ENCODE measurements at regions of chr7 and their contacts with region 1.

Region 1: DNA sequence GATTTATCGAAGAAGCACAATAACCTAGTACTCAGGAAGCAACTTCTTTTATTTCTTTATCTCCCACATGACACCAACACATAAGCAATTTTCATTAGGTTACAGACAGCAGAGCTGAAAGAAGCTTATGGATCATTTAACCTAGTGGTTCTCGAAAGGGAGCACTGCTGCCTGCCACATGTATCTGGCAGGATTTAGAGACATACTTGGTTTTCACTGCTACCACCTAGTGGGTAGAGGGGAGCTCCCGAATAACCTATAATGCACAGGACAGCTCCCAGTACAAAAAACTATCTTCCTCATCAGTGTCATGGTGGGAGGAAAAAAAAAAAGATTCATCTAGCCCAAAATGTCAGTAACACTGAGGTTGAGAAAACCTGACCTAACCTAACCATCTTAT is 34.5 kb downstream of the FZD9 start:
- DNase-seq: no peak
- H3K4me3 ChIP-seq: no peak overlapping the region
- CTCF ChIP-seq: no peak
- POLR2A ChIP-seq: no peak

Region 2: GRCh38 chr7:73647725-73648592 is 179.9 kb after region 1 on chr7:
- intact Hi-C with region 1: loop called (anchors 10 kb)
- DNase-seq: no peak
- H3K4me3 ChIP-seq: no peak overlapping the region
- CTCF ChIP-seq: no peak
- POLR2A ChIP-seq: no peak

Region 3: DNA sequence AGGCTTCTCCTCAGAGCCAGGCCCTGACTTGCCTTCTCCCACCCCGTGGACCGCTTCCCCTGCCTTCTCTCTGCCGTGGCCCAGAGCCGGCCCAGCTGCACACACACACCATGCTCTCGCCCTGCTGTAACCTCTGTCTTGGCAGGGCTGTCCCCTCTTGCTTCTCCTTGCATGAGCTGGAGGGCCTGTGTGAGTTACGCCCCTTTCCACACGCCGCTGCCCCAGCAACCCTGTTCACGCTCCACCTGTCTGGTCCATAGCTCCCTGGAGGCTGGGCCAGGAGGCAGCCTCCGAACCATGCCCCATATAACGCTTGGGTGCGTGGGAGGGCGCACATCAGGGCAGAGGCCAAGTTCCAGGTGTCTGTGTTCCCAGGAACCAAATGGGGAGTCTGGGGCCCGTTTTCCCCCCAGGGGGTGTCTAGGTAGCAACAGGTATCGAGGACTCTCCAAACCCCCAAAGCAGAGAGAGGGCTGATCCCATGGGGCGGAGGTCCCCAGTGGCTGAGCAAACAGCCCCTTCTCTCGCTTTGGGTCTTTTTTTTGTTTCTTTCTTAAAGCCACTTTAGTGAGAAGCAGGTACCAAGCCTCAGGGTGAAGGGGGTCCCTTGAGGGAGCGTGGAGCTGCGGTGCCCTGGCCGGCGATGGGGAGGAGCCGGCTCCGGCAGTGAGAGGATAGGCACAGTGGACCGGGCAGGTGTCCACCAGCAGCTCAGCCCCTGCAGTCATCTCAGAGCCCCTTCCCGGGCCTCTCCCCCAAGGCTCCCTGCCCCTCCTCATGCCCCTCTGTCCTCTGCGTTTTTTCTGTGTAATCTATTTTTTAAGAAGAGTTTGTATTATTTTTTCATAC is 653.5 kb after region 1 on chr7:
- intact Hi-C with region 1: no loop called
- DNase-seq: no peak
- H3K4me3 ChIP-seq: no peak overlapping the region
- CTCF ChIP-seq: no peak
- POLR2A ChIP-seq: no peak

Measured in lower leg skin (tissue), 4 donors.